Activated CD4-positive, alpha-beta memory T cell treated with anti-CD3 and anti-CD28 coated beads for 36 hours (primary cell): ENCODE measurements at regions of chr1 and their contacts with region 1.

Region 1: DNA sequence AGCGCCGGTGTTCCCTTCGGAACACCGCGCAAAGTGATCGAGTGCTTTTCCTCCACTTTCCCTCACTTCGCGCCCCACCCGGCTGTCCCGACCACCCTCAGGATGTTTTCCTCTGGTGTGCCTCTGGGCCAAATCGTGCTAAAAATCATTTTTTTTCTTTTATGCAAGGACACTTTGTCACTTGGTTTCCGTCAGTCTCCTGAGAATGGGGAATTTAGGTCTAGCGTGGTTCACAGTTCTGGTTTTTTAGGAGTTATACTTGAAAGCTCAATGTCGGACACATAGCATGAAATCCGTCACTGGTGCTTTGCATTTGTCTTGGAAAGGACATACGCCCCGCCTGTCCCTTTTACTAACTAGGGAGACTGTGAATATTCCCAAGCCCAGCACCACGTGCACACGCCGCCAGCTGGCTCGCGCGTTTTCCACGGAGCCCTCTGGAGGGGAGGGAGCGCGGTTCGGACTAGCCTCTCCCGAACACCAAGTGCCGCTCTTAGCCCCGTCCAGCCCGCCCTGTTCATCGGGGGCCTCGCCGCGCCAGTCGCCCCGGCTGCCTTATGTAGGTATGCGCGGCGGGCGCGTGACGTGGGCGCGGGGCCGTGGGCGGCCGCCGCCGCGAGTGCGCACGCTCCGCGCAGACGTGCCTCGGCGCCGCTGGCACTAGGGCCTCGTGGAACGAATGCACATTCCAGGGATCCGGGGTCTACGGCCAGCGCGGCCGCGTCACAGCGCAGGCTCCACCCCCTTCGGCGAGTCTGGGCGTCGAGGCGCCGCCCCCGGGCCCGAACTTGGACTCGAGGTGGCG is 572 bp upstream of the IRF2BP2 start:
- DNase-seq: peak; percentile 94
- H3K4me3 Mint-ChIP-seq: peak overlapping the region; percentile 85
- H3K27ac Mint-ChIP-seq: peak overlapping the region; percentile 99
- H3K4me1 Mint-ChIP-seq: peaks cover 37% of the 10 kb centered on the region
- H3K27me3 Mint-ChIP-seq: peaks cover 5% of the 10 kb centered on the region

Region 2: GRCh38 chr1:234564642-234565037 is 45.9 kb before region 1 on chr1:
- CTCF ChIA-PET with region 1: no interaction called
- POLR2A ChIA-PET with region 1: no interaction called
- intact Hi-C with region 1: no loop called
- DNase-seq: peak; percentile 48
- H3K4me3 Mint-ChIP-seq: no peak overlapping the region
- H3K27ac Mint-ChIP-seq: no peak overlapping the region
- H3K4me1 Mint-ChIP-seq: peaks cover 6% of the 10 kb centered on the region
- H3K27me3 Mint-ChIP-seq: peaks cover 2% of the 10 kb centered on the region

Region 3: DNA sequence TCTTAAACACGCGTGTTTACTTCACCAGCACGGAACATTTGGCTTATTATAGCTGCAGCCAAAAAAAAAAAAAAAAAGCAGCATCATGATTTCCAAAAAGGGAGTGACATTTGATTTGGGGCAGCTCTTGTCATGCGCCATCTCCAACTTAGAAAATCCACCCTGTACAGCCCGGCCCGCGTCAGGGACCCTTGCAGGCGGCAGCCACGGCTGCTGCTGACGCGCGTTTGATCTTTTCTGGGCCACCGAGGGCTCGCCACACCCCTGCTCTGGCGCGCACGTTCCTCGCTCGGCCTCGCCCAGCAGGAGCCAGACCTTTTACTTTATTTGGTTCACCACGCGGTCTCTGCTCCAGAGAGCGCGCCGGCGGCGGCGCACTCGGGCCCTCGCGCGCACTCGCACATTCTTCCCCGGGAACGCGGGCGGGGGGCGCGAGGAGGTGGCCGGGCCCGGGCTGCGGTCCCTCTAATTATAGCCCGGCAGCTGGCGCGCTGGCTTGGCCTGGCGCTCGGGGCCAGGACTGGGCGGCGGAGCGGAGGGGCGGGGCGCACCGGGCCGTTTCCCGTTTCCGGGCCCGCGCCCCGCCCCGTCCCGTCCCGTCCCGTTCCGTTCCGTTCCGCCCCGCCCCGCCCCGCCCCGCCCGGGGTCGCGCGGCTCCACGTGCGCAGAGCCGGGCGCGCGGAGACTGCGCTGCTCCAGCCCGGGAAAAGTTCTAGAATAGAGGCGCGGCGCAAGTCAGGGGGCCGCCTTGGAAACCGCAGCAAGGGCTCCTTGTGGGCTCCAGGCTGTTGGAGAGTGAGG is 10.7 kb before region 1 on chr1:
- CTCF ChIA-PET with region 1: interaction called, 11 read pairs
- POLR2A ChIA-PET with region 1: interaction called, 78 read pairs
- intact Hi-C with region 1: loop called (anchors 1 kb)
- DNase-seq: peak; percentile 82
- H3K4me3 Mint-ChIP-seq: peak overlapping the region; percentile 85
- H3K27ac Mint-ChIP-seq: peak overlapping the region; percentile 100
- H3K4me1 Mint-ChIP-seq: peaks cover 54% of the 10 kb centered on the region
- H3K27me3 Mint-ChIP-seq: no peaks in the 10 kb centered on the region

Region 4: GRCh38 chr1:234675572-234675971 is 65.0 kb after region 1 on chr1:
- CTCF ChIA-PET with region 1: no interaction called
- POLR2A ChIA-PET with region 1: no interaction called
- intact Hi-C with region 1: no loop called
- DNase-seq: no peak
- H3K4me3 Mint-ChIP-seq: no peak overlapping the region
- H3K27ac Mint-ChIP-seq: no peak overlapping the region
- H3K4me1 Mint-ChIP-seq: peaks cover 14% of the 10 kb centered on the region
- H3K27me3 Mint-ChIP-seq: no peaks in the 10 kb centered on the region

Region 5: GRCh38 chr1:234730770-234731568 is 120.4 kb after region 1 on chr1:
- CTCF ChIA-PET with region 1: interaction called, 29 read pairs
- POLR2A ChIA-PET with region 1: interaction called, 124 read pairs
- intact Hi-C with region 1: loop called (anchors 1 kb)
- DNase-seq: peak; percentile 78
- H3K4me3 Mint-ChIP-seq: peak overlapping the region; percentile 40
- H3K27ac Mint-ChIP-seq: peak overlapping the region; percentile 99
- H3K4me1 Mint-ChIP-seq: peaks cover 77% of the 10 kb centered on the region
- H3K27me3 Mint-ChIP-seq: no peaks in the 10 kb centered on the region

Region 6: DNA sequence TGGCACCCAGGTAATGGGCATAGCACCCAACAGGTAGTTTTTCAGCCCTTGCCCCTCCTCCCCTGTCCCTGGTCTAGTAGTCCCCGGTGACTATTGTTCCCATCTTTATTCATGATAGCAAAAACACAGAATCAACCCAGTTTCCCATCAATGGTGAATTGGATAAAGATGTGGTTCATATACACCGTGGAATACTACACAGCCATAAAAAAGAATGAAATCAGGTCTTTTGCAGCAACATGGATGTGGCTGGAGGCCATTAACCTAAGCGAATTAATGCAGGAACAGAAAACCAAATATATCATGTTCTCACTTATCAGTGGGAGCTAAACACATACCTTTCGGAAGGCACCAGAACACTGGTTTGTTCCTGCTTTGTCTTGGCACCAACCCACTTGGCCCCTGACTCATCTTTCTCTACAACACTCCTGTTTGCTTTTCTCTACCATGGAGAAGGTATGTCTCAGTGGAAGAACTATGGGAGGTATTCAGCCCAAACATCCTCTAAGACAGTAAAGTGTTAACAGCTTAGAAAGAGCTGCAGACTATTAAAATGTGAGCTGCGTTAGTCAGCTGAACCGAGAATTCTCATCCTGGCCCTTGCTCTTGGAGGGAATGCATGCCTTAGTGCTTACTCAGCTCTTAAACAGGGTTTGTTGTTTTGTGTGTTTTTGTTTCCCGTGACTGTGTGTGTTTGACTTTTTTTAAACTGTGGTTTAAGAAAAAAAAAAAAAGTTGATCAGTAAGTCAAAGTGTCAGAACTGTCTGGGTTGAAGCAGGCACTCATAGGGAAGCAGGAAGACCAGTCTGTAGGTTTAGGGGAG is 315.1 kb after region 1 on chr1:
- CTCF ChIA-PET with region 1: no interaction called
- POLR2A ChIA-PET with region 1: interaction called, 6 read pairs
- intact Hi-C with region 1: loop called (anchors 2 kb)
- DNase-seq: peak; percentile 46
- H3K4me3 Mint-ChIP-seq: peak overlapping the region; percentile 66
- H3K27ac Mint-ChIP-seq: peak overlapping the region; percentile 98
- H3K4me1 Mint-ChIP-seq: peaks cover 54% of the 10 kb centered on the region
- H3K27me3 Mint-ChIP-seq: no peaks in the 10 kb centered on the region

Region 7: DNA sequence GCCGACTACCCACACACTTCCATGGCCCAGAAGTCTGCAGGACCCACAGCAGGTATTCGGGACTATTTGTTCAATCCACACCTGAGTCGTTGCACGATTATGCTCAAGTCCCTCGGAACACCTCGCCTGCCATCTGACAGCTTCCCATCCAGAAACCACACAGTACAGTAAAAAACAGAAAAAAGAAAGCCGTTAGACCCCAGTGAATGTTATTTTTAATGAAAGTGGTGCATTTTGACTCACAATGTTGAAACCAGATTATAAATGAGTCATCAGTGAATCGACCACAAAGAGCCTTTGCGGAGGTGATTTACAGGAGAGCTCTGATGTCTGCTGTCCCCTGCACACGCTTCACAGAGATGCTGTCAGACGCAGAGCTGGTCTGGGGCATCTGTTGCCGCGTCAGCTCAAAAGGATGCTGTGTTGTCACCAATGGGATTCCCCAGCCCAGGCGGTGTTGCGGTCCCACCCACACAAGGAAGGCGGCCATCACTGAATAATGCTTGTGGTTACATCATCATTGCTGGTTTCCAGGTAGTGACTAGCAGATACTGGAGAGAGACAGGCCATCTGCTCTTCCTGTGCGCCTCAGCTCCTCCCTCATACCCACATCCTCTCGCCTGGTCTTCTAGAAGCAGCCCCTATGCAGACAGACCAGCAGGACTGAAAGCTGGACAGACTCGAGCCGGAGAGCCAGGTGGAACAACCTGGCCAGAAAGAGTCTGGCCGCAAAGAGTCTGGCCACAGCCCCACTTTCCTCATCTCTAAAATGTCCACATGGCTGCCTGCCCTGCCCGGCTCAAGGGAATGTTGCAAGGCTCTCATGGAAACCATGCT is 401.3 kb after region 1 on chr1:
- CTCF ChIA-PET with region 1: interaction called, 4 read pairs
- POLR2A ChIA-PET with region 1: interaction called, 28 read pairs
- intact Hi-C with region 1: loop called (anchors 1 kb)
- DNase-seq: peak; percentile 99
- H3K4me3 Mint-ChIP-seq: peak overlapping the region; percentile 56
- H3K27ac Mint-ChIP-seq: peak overlapping the region; percentile 97
- H3K4me1 Mint-ChIP-seq: peaks cover 90% of the 10 kb centered on the region
- H3K27me3 Mint-ChIP-seq: peaks cover 2% of the 10 kb centered on the region

Region 8: GRCh38 chr1:235504496-235505222 is 894.1 kb after region 1 on chr1:
- CTCF ChIA-PET with region 1: no interaction called
- POLR2A ChIA-PET with region 1: no interaction called
- intact Hi-C with region 1: loop called (anchors 10 kb)
- DNase-seq: peak; percentile 99
- H3K4me3 Mint-ChIP-seq: peak overlapping the region; percentile 86
- H3K27ac Mint-ChIP-seq: peak overlapping the region; percentile 95
- H3K4me1 Mint-ChIP-seq: peaks cover 32% of the 10 kb centered on the region
- H3K27me3 Mint-ChIP-seq: no peaks in the 10 kb centered on the region